ENCODE measurements at regions of chr10 and their contacts with region 1.

Region 1: DNA sequence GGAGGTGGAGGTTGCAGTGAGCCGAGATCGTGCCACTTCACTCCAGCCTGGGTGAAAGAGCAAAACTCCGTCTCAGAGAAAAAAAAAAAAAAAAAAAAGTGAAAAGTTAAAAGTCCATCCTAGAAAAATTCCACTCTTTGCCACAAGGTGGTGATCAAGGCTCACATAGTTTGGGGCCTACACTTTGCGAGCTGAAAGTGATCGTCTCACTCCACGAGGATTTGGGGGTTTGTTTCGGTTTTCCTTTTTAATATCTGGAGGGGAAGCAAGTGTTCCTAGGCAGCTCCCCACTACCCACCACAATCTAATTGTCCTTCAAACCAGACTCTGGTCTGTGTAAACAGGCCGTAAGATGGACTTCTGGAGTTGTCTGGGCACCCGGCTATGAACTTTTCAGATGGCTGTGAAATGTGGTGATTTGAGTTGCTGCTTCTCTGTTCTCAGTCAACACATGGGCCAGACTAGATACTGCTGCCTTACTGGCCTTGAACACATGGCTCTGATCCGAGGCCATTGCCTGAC is 27.1 kb downstream of the PRLHR start:
- DNase-seq: peak in 13 of 14 experiments; percentile 17 to 85 (median 45)
- ATAC-seq: peak; percentile 75
- H3K4me3 ChIP-seq: no peak overlapping the region
- H3K4me3 Mint-ChIP-seq: no peak overlapping the region
- H3K27ac ChIP-seq: no peak overlapping the region
- H3K27ac Mint-ChIP-seq: no peak overlapping the region
- H3K4me1 ChIP-seq: peaks cover 12% of the 10 kb centered on the region
- H3K4me1 Mint-ChIP-seq: peaks cover 13% of the 10 kb centered on the region
- H3K27me3 ChIP-seq: no peaks in the 10 kb centered on the region
- H3K27me3 Mint-ChIP-seq: no peaks in the 10 kb centered on the region
- CTCF ChIP-seq: peak; percentile 78

Region 2: GRCh38 chr10:118720685-118721538 is 152.5 kb after region 1 on chr10:
- CTCF ChIA-PET with region 1: interaction called, 14 read pairs
- POLR2A ChIA-PET with region 1: interaction called, 7 read pairs
- intact Hi-C with region 1: loop called (anchors 1 kb)
- DNase-seq: peak in 13 of 14 experiments; percentile 39 to 83 (median 59)
- ATAC-seq: peak; percentile 65
- H3K4me3 ChIP-seq: no peak overlapping the region
- H3K4me3 Mint-ChIP-seq: no peak overlapping the region
- H3K27ac ChIP-seq: no peak overlapping the region
- H3K27ac Mint-ChIP-seq: no peak overlapping the region
- H3K4me1 ChIP-seq: no peaks in the 10 kb centered on the region
- H3K4me1 Mint-ChIP-seq: peaks cover 21% of the 10 kb centered on the region
- H3K27me3 ChIP-seq: no peaks in the 10 kb centered on the region
- H3K27me3 Mint-ChIP-seq: no peaks in the 10 kb centered on the region
- CTCF ChIP-seq: peak; percentile 87

Region 3: GRCh38 chr10:118800920-118801319 is 232.5 kb after region 1 on chr10:
- CTCF ChIA-PET with region 1: interaction called, 6 read pairs
- POLR2A ChIA-PET with region 1: interaction called, 4 read pairs
- intact Hi-C with region 1: loop called (anchors 1 kb)
- DNase-seq: peak in 7 of 14 experiments; percentile 7 to 37 (median 19)
- ATAC-seq: no peak
- H3K4me3 ChIP-seq: no peak overlapping the region
- H3K4me3 Mint-ChIP-seq: no peak overlapping the region
- H3K27ac ChIP-seq: no peak overlapping the region
- H3K27ac Mint-ChIP-seq: no peak overlapping the region
- H3K4me1 ChIP-seq: no peaks in the 10 kb centered on the region
- H3K4me1 Mint-ChIP-seq: no peaks in the 10 kb centered on the region
- H3K27me3 ChIP-seq: no peaks in the 10 kb centered on the region
- H3K27me3 Mint-ChIP-seq: peaks cover 6% of the 10 kb centered on the region
- CTCF ChIP-seq: peak; percentile 19

Region 4: GRCh38 chr10:118850418-118851061 is 282.2 kb after region 1 on chr10:
- CTCF ChIA-PET with region 1: interaction called, 3 read pairs
- POLR2A ChIA-PET with region 1: no interaction called
- intact Hi-C with region 1: loop called (anchors 1 to 2 kb)
- DNase-seq: peak; percentile 33 to 68 (median 48)
- ATAC-seq: no peak
- H3K4me3 ChIP-seq: no peak overlapping the region
- H3K4me3 Mint-ChIP-seq: no peak overlapping the region
- H3K27ac ChIP-seq: no peak overlapping the region
- H3K27ac Mint-ChIP-seq: no peak overlapping the region
- H3K4me1 ChIP-seq: no peaks in the 10 kb centered on the region
- H3K4me1 Mint-ChIP-seq: no peaks in the 10 kb centered on the region
- H3K27me3 ChIP-seq: no peaks in the 10 kb centered on the region
- H3K27me3 Mint-ChIP-seq: peaks cover 8% of the 10 kb centered on the region
- CTCF ChIP-seq: peak; percentile 53

Region 5: DNA sequence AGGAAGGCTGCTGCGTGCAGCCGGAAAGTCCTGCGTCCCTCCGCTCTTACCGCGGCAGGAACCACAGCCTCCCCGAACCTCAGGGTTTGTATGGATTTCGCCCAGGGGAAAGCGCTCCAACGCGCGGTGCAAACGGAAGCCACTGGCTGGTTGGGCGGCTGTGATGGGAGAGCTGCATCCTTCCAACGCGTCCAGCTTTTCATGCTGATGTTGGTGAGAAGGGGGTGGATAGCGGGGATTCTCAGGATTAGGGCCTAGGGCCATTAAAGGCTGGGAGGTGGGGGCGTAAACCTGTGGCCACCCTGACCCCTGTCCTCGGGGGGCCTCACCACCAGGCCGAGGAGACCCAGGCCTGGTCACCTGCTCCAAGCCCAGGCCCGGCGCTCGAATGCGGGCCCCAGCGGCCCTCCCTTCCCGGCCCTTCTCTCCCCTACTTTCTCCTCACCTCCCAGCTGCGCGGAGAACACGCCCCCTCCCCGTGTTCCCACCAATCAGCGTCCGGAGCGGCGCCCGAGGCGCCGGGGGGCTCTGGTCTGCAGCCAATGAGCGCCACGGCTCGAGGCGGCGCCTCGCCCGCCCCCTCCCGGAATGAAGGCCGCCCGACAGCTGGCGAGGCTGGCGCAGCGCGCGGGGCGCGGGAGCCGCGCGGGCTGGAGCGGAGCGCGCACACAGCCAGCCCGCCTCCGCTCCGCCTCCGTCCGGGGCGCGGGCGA is 460.7 kb after region 1 on chr10:
- CTCF ChIA-PET with region 1: no interaction called
- POLR2A ChIA-PET with region 1: no interaction called
- intact Hi-C with region 1: loop called (anchors 2 to 5 kb)
- DNase-seq: peak; percentile 56 to 91 (median 76)
- ATAC-seq: peak; percentile 83
- H3K4me3 ChIP-seq: peak overlapping the region; percentile 55
- H3K4me3 Mint-ChIP-seq: peak overlapping the region; percentile 87
- H3K27ac ChIP-seq: no peak overlapping the region
- H3K27ac Mint-ChIP-seq: no peak overlapping the region
- H3K4me1 ChIP-seq: peaks cover 13% of the 10 kb centered on the region
- H3K4me1 Mint-ChIP-seq: peaks cover 20% of the 10 kb centered on the region
- H3K27me3 ChIP-seq: no peaks in the 10 kb centered on the region
- H3K27me3 Mint-ChIP-seq: no peaks in the 10 kb centered on the region
- CTCF ChIP-seq: no peak

Region 6: DNA sequence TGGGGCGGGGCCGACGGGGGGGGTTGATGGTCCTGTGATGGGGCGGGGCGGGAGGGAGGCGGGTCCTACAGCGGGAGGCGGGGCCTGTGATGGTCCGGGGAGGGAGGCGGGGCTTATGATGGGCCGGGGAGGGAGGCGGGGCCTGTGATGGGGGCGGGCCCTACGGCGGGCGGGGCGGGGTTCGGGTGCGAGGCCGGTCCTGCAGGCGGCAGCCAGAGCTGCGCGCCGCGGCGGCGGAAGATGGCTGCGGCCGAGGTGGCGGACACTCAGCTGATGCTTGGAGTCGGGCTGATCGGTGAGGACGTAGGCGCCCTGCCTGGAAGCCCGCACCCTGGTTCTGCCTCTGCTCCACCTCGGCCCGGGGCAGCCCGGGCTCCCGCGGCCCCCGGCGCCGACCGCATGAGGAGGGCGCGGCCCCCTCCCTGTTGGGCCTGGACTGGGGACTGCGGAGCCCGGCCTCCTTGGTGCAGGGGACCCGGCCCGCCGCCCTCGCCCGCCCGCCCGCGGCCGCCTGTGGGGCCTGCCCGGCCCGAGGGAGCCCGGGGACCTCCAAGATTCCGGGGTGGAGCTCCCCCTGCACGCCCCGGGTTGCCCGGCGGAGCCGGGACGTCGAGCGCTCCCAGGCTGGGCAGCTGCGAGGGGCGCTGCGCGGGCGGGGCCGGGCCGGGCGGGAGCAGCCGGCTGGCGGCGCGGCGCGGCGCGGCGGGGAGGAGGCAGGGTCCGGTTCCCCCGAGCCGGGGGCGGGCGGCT is 535.7 kb after region 1 on chr10 and contains the start of gene DENND10:
- CTCF ChIA-PET with region 1: no interaction called
- POLR2A ChIA-PET with region 1: no interaction called
- intact Hi-C with region 1: no loop called
- DNase-seq: peak; percentile 51 to 90 (median 71)
- ATAC-seq: peak; percentile 77
- H3K4me3 ChIP-seq: peak within 1 kb of the TSS; percentile 66
- H3K4me3 Mint-ChIP-seq: peak within 1 kb of the TSS; percentile 95
- H3K27ac ChIP-seq: peak within 1 kb of the TSS in 1 of 2 donors; percentile 40
- H3K27ac Mint-ChIP-seq: peak within 1 kb of the TSS; percentile 94
- H3K4me1 ChIP-seq: peaks cover 26% of the 10 kb centered on the region
- H3K4me1 Mint-ChIP-seq: peaks cover 13% of the 10 kb centered on the region
- H3K27me3 ChIP-seq: no peaks in the 10 kb centered on the region
- H3K27me3 Mint-ChIP-seq: no peaks in the 10 kb centered on the region
- CTCF ChIP-seq: no peak
- total RNA-seq, gene DENND10: 40.4 to 45.6 TPM